HepG2 (cell line): ENCODE measurements at regions of chr17 and their contacts with region 1.

Region 1: GRCh38 chr17:37527249-37527851 is 37.7 kb downstream of the DUSP14 start:
- DNase-seq: peak; percentile 63
- ATAC-seq: peak; percentile 83
- H3K4me3 ChIP-seq: no peak overlapping the region
- H3K27ac ChIP-seq: no peak overlapping the region
- H3K4me1 ChIP-seq: no peaks in the 10 kb centered on the region
- H3K27me3 ChIP-seq: no peaks in the 10 kb centered on the region
- CTCF ChIP-seq: peak; percentile 70
- EP300 ChIP-seq: no peak
- POLR2A ChIP-seq: no peak
- RAD21 ChIP-seq: peak; percentile 50; the same call in 1 of the 2 replicates

Region 2: GRCh38 chr17:37570527-37571093 is 43.3 kb after region 1 on chr17:
- CTCF ChIA-PET with region 1: no interaction called
- POLR2A ChIA-PET with region 1: no interaction called
- in situ Hi-C with region 1: no loop called
- intact Hi-C with region 1: loop called (anchors 2 kb)
- DNase-seq: peak; percentile 60
- ATAC-seq: peak; percentile 94
- H3K4me3 ChIP-seq: no peak overlapping the region
- H3K27ac ChIP-seq: no peak overlapping the region
- H3K4me1 ChIP-seq: no peaks in the 10 kb centered on the region
- H3K27me3 ChIP-seq: no peaks in the 10 kb centered on the region
- CTCF ChIP-seq: peak; percentile 85
- EP300 ChIP-seq: no peak
- POLR2A ChIP-seq: no peak
- RAD21 ChIP-seq: peak; percentile 57; the same call in 1 of the 2 replicates

Region 3: GRCh38 chr17:37609170-37610040 is 82.1 kb after region 1 on chr17 and contains the start of gene SYNRG:
- CTCF ChIA-PET with region 1: no interaction called
- POLR2A ChIA-PET with region 1: no interaction called
- in situ Hi-C with region 1: no loop called
- intact Hi-C with region 1: loop called (anchors 1 kb)
- DNase-seq: peak; percentile 92
- ATAC-seq: peak; percentile 96
- H3K4me3 ChIP-seq: peak within 1 kb of the TSS; percentile 89 to 99 (median 92)
- H3K27ac ChIP-seq: peak within 1 kb of the TSS; percentile 92
- H3K4me1 ChIP-seq: peaks cover 28% of the 10 kb centered on the region
- H3K27me3 ChIP-seq: no peaks in the 10 kb centered on the region
- CTCF ChIP-seq: peak; percentile 61
- EP300 ChIP-seq: peak in 1 of 2 experiments; percentile 28; a peak in 1 of 4 replicates
- POLR2A ChIP-seq: peak; percentile 75 to 83
- RAD21 ChIP-seq: 0 out of 2 replicates have a peak, but pooled peaks have one; percentile 24
- total RNA-seq, gene SYNRG: 8.7 and 15.4 TPM in 2 replicates

Region 4: DNA sequence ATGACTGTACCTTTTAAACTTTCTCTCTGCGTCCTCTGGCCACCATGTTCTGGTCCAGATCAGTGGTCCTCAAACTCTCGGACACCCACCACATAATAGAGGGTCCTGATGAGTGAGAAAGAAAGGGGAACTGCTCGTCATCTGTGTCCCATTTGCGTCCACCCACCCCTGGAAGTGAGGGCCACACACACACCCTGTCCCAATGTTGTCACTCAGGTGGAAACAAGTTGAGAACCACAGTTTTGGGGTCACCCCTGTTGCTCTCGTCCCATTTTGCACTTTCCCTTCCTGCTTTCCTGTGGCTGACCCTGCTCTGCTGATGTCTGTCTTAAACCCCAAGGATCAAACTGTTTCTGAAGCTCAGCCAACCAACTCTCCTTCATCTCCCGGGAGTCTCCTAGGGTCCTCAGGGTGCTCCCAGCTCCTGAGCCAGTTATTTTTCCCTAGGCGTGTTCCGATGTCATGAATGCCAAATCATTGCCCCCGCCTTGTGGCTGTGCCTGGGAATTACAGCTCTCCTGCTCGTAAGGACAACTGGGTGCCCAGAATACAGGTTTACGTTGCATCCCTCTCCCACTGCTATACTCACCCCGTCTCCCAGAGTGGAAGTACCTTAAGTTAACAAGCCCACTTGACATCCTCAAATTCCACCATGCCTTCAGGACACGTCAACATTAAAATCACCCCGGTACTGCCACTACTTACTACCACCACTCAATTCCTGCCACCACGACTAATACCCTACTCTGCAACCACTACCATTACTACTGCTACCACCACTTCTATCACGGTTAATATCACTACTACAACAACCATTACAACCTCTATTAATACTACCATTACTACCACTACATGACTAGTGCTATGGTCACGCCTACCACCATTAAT is 243.5 kb after region 1 on chr17:
- CTCF ChIA-PET with region 1: no interaction called
- POLR2A ChIA-PET with region 1: no interaction called
- in situ Hi-C with region 1: no loop called
- intact Hi-C with region 1: loop called (anchors 10 kb)
- DNase-seq: peak; percentile 61
- ATAC-seq: peak; percentile 81
- H3K4me3 ChIP-seq: no peak overlapping the region
- H3K27ac ChIP-seq: no peak overlapping the region
- H3K4me1 ChIP-seq: peaks cover 54% of the 10 kb centered on the region
- H3K27me3 ChIP-seq: peaks cover 0 to 4% of the 10 kb centered on the region in 2 experiments; a peak in 3 of 5 replicates
- CTCF ChIP-seq: peak; percentile 95
- EP300 ChIP-seq: no peak
- POLR2A ChIP-seq: no peak
- RAD21 ChIP-seq: peak; percentile 86

Region 5: DNA sequence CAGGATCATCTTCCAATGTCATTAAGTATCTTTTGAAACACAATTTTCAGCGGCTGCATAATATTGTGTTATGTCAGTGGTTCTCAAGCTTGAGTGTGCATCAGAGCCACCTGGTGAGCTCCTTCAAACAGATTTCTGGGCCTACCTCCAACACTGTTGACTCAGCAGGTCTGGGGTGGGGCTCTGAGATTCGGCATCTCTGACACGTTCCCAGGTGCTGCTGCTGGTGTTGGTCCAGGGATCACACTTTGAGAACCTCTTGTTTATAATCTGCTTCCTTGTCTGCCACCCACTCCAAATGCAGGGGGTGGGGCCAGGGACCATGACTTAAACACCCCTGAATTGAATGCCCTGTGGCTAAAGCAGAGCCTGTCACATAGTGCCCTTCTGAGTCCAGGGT is 291.3 kb after region 1 on chr17:
- CTCF ChIA-PET with region 1: interaction called, 3 read pairs
- POLR2A ChIA-PET with region 1: no interaction called
- in situ Hi-C with region 1: no loop called
- intact Hi-C with region 1: loop called (anchors 5 kb)
- DNase-seq: no peak
- ATAC-seq: no peak
- H3K4me3 ChIP-seq: no peak overlapping the region
- H3K27ac ChIP-seq: no peak overlapping the region
- H3K4me1 ChIP-seq: peaks cover 29% of the 10 kb centered on the region
- H3K27me3 ChIP-seq: peaks cover 0 to 5% of the 10 kb centered on the region in 2 experiments; a peak in 3 of 5 replicates
- CTCF ChIP-seq: no peak
- EP300 ChIP-seq: no peak
- POLR2A ChIP-seq: no peak
- RAD21 ChIP-seq: no peak